ENCODE measurements at regions of chr18 and their contacts with region 1.

Region 1: DNA sequence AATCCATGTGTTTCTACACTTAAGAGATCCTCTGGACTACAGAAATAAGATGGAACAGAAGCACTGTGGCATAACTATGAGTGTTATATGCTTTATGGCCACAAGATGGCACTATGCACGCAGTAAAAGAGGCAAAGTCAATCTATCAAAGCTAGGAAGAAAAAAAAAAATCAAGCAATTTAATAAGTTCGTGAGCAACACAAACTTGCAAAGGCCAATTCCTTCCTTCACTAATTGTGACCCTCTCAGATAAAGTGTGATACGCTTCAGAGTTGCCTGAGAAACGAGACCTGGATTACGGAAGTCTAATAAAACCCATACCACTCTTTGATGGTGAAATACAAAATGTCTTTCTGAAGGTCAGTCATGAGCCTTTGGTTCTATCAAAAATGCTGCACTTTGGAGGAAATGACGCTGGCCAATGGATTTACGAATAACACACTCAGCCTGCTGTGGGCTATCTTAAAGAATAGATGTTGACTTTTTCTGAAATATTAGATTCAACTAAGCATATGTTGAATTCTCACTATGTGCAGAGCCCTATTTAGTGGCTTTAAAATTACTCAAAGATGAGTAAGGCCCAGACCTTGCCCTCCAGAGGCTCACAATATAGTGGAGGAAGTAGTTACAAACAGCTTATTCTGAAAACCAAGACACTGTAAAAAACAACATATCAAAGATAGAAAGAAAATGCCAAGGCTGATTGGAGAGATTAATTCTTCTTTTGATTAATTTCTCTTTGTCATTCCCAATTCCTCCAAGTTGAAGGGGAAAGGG is 35.5 kb upstream of the TTR start:
- DNase-seq: no peak
- ATAC-seq: peak; percentile 56 to 75
- H3K4me3 ChIP-seq: no peak overlapping the region
- H3K27ac ChIP-seq: no peak overlapping the region
- H3K4me1 ChIP-seq: no peaks in the 10 kb centered on the region
- H3K27me3 ChIP-seq: no peaks in the 10 kb centered on the region

Region 2: GRCh38 chr18:31722369-31722957 is 166.3 kb after region 1 on chr18:
- intact Hi-C with region 1: loop called (anchors 5 kb)
- DNase-seq: peak; percentile 71 to 90 (median 73)
- ATAC-seq: peak; percentile 86 to 90
- H3K4me3 ChIP-seq: no peak overlapping the region
- H3K27ac ChIP-seq: no peak overlapping the region
- H3K4me1 ChIP-seq: no peaks in the 10 kb centered on the region
- H3K27me3 ChIP-seq: no peaks in the 10 kb centered on the region

Region 3: GRCh38 chr18:31819106-31819924 is 263.2 kb after region 1 on chr18:
- intact Hi-C with region 1: loop called in 3 of 4 experiments (anchors 5 to 10 kb)
- DNase-seq: no peak
- ATAC-seq: peak; percentile 48 to 61
- H3K4me3 ChIP-seq: no peak overlapping the region
- H3K27ac ChIP-seq: no peak overlapping the region
- H3K4me1 ChIP-seq: no peaks in the 10 kb centered on the region
- H3K27me3 ChIP-seq: no peaks in the 10 kb centered on the region

Region 4: GRCh38 chr18:31977270-31977872 is 421.2 kb after region 1 on chr18:
- intact Hi-C with region 1: loop called in 2 of 4 experiments (anchors 10 kb)
- DNase-seq: no peak
- ATAC-seq: peak in 1 of 2 donors; percentile 60
- H3K4me3 ChIP-seq: no peak overlapping the region
- H3K27ac ChIP-seq: no peak overlapping the region
- H3K4me1 ChIP-seq: no peaks in the 10 kb centered on the region
- H3K27me3 ChIP-seq: no peaks in the 10 kb centered on the region

Region 5: DNA sequence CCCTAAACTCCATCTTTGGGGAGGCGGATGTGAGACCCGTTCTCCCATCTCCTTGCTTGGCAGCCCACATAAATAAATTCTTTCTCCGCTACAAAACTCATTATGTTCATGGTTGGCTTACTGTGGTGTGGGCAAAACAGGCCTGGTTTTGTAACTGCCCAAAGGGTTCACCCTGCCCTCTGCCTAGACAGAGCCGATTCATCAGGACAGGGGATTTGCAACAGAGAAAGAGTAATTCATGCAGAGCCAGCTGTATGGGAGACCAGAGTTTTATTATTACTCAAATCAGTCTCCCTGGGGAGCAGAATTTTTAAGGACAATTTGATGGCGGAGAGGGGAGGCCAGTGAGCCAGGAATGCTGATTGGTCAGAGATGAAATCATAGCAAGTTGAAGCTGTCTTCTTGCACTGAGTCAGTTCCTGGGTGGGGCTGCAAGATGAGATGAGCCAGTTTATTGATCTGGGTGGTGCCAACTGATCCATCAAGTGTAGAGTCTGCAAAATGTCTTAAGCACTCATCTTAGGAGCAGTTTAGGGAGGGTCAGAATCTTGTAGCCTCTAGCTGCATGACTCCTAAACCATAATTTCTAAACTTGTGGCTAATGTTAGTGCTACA is 454.1 kb after region 1 on chr18:
- intact Hi-C with region 1: loop called in 1 of 4 experiments (anchors 10 kb)
- DNase-seq: no peak
- ATAC-seq: no peak
- H3K4me3 ChIP-seq: no peak overlapping the region
- H3K27ac ChIP-seq: no peak overlapping the region
- H3K4me1 ChIP-seq: no peaks in the 10 kb centered on the region
- H3K27me3 ChIP-seq: no peaks in the 10 kb centered on the region